Motor neuron (in vitro differentiated cells): ENCODE measurements at regions of chrX and their contacts with region 1.

Region 1: DNA sequence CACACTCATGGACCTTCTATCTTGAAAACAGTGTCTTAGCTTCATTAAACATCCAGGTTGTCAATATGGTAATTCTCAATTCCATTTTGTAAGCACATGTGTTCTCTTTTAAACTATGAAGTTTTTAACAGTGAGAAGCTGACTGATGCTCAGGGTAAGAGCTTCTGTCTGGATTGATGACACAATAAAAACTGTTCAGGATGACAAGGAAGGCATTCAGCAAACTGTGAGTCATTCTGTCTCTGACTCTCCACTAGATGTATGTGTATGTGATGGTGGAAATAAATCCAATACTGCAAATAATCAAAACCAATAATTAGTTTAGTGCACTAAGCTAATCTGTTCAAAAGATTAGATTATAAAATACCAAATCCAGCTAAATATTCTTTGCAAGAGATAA is 115.3 kb upstream of the ARX start:
- ATAC-seq: peak in 7 of 8 experiments; percentile 34 to 93 (median 70)
- H3K4me3 ChIP-seq: no peak overlapping the region
- H3K27ac ChIP-seq: no peak overlapping the region
- H3K4me1 ChIP-seq: no peaks in the 10 kb centered on the region

Region 2: GRCh38 chrX:24963823-24964222 is 167.2 kb before region 1 on chrX:
- in situ Hi-C with region 1: no loop called
- ATAC-seq: peak in 3 of 8 experiments; percentile 72 to 89 (median 83)
- H3K4me3 ChIP-seq: no peak overlapping the region
- H3K27ac ChIP-seq: no peak overlapping the region
- H3K4me1 ChIP-seq: no peaks in the 10 kb centered on the region

Region 3: DNA sequence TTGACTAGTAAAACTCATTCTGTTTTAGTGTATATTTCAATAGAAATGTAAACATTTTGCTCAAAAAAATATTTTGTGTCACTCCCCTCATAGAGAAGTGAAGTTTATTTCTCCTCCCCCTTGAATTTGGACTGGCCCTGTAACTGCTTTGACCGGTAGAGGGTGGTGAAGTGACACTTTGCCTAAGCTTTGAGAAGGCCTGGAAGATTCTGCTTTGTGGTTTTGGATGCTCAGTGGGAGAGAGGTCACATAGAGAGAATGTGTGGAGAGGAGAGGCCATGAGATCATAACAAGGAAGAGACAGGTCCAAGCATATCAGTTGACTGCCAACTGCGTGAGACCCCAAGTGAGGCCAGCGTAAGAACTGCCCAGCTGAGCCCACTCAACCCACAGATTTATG is 96.2 kb before region 1 on chrX:
- in situ Hi-C with region 1: loop called in 2 of 9 experiments (anchors 10 to 25 kb)
- ATAC-seq: peak in 3 of 8 experiments; percentile 25 to 77 (median 66)
- H3K4me3 ChIP-seq: no peak overlapping the region
- H3K27ac ChIP-seq: no peak overlapping the region
- H3K4me1 ChIP-seq: no peaks in the 10 kb centered on the region